ENCODE measurements at regions of chr2 and their contacts with region 1.

Region 1: GRCh38 chr2:160252278-160252887 is 52.3 kb upstream of the ITGB6 start:
- DNase-seq: no peak
- H3K4me3 ChIP-seq: no peak overlapping the region
- H3K27ac ChIP-seq: no peak overlapping the region
- H3K27me3 ChIP-seq: peaks cover 0 to 4% (median 0%) of the 10 kb centered on the region in 45 donors
- CTCF ChIP-seq: peak; percentile 59 to 89 (median 78)

Region 2: GRCh38 chr2:160299540-160299939 is 47.2 kb after region 1 on chr2:
- intact Hi-C with region 1: no loop called
- DNase-seq: no peak
- H3K4me3 ChIP-seq: no peak overlapping the region
- H3K27ac ChIP-seq: no peak overlapping the region
- H3K27me3 ChIP-seq: no peaks in the 10 kb centered on the region
- CTCF ChIP-seq: no peak

Region 3: DNA sequence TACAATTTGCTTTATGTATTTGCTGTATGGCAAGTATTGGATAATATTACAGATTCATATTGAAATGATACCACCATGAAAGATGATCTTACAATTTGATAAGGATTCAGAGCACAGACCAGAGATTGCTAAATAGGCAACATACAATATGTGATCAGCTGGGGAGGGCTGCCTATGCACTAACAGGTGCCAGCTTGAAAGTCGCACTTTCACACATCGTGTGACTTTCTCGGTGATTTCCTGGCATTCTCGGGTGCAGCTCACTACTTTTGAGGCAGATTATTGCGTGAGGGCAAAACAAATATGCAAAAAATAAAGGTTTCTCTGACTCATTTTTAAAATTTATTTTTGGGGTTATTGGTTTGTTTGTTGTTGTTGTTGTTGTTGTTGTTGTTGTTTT is 205.2 kb after region 1 on chr2:
- intact Hi-C with region 1: no loop called
- DNase-seq: no peak
- H3K4me3 ChIP-seq: no peak overlapping the region
- H3K27ac ChIP-seq: no peak overlapping the region
- H3K27me3 ChIP-seq: no peaks in the 10 kb centered on the region
- CTCF ChIP-seq: no peak

Region 4: GRCh38 chr2:160994141-160995002 is 742.0 kb after region 1 on chr2:
- intact Hi-C with region 1: loop called in 1 of 2 experiments (anchors 5 kb)
- DNase-seq: peak in 7 of 10 donors; percentile 35 to 83 (median 53)
- H3K4me3 ChIP-seq: peak overlapping the region in 45 of 59 donors; percentile 3 to 51 (median 33)
- H3K27ac ChIP-seq: peak overlapping the region in 2 of 59 donors; percentile 3 to 27
- H3K27me3 ChIP-seq: no peaks in the 10 kb centered on the region
- CTCF ChIP-seq: peak; percentile 72 to 97 (median 90)